CD8-positive, alpha-beta T cell (primary cell): ENCODE measurements at regions of chr19 and their contacts with region 1.

Region 1: GRCh38 chr19:29610563-29611271 is 4.6 kb downstream of the POP4 start:
- DNase-seq: peak; percentile 77 to 92 (median 86)
- ATAC-seq: peak; percentile 58
- H3K4me3 ChIP-seq: peak overlapping the region in 1 of 2 experiments; percentile 20
- H3K4me3 Mint-ChIP-seq: no peak overlapping the region
- H3K27ac ChIP-seq: peak overlapping the region in 1 of 2 experiments; percentile 62
- H3K27ac Mint-ChIP-seq: peak overlapping the region; percentile 42
- H3K4me1 ChIP-seq: peaks cover 19% of the 10 kb centered on the region
- H3K4me1 Mint-ChIP-seq: peaks cover 28% of the 10 kb centered on the region
- H3K27me3 ChIP-seq: no peaks in the 10 kb centered on the region
- H3K27me3 Mint-ChIP-seq: no peaks in the 10 kb centered on the region
- CTCF ChIP-seq: peak; percentile 88

Region 2: DNA sequence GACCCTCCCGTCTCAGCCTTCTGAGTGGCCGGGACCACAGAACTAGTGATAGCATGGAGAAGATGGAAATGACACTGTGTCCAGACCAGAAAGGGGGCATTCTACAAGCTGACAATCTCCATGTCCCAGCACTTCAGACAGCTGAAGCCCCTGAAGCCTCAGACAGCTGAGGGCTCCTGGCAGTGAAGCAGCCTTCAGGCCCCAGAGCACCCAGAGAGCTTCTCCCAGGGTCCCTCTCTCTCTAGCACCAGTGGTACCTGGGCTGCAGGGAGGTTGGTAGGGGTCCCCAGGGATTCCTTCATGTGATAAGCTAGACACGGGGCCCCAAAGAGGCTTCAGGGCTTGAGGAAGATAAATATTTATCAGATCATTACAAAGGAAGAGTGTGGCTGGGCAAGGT is 12.2 kb before region 1 on chr19:
- CTCF ChIA-PET with region 1: interaction called, 15 read pairs
- POLR2A ChIA-PET with region 1: interaction called, 6 read pairs
- intact Hi-C with region 1: no loop called
- DNase-seq: no peak
- ATAC-seq: no peak
- H3K4me3 ChIP-seq: no peak overlapping the region
- H3K4me3 Mint-ChIP-seq: no peak overlapping the region
- H3K27ac ChIP-seq: no peak overlapping the region
- H3K27ac Mint-ChIP-seq: no peak overlapping the region
- H3K4me1 ChIP-seq: no peaks in the 10 kb centered on the region
- H3K4me1 Mint-ChIP-seq: no peaks in the 10 kb centered on the region
- H3K27me3 ChIP-seq: peaks cover 0 to 2% of the 10 kb centered on the region in 2 experiments
- H3K27me3 Mint-ChIP-seq: peaks cover 10% of the 10 kb centered on the region
- CTCF ChIP-seq: no peak

Region 3: GRCh38 chr19:29671393-29672160 is 60.9 kb after region 1 on chr19:
- CTCF ChIA-PET with region 1: interaction called, 87 read pairs
- POLR2A ChIA-PET with region 1: interaction called, 51 read pairs
- intact Hi-C with region 1: loop called (anchors 1 to 2 kb)
- DNase-seq: peak; percentile 73 to 96 (median 91)
- ATAC-seq: peak; percentile 62
- H3K4me3 ChIP-seq: peak overlapping the region; percentile 16 to 26
- H3K4me3 Mint-ChIP-seq: peak overlapping the region; percentile 49
- H3K27ac ChIP-seq: peak overlapping the region; percentile 80 to 84
- H3K27ac Mint-ChIP-seq: peak overlapping the region; percentile 94
- H3K4me1 ChIP-seq: peaks cover 97% of the 10 kb centered on the region
- H3K4me1 Mint-ChIP-seq: peaks cover 90% of the 10 kb centered on the region
- H3K27me3 ChIP-seq: no peaks in the 10 kb centered on the region
- H3K27me3 Mint-ChIP-seq: no peaks in the 10 kb centered on the region
- CTCF ChIP-seq: peak; percentile 62

Region 4: DNA sequence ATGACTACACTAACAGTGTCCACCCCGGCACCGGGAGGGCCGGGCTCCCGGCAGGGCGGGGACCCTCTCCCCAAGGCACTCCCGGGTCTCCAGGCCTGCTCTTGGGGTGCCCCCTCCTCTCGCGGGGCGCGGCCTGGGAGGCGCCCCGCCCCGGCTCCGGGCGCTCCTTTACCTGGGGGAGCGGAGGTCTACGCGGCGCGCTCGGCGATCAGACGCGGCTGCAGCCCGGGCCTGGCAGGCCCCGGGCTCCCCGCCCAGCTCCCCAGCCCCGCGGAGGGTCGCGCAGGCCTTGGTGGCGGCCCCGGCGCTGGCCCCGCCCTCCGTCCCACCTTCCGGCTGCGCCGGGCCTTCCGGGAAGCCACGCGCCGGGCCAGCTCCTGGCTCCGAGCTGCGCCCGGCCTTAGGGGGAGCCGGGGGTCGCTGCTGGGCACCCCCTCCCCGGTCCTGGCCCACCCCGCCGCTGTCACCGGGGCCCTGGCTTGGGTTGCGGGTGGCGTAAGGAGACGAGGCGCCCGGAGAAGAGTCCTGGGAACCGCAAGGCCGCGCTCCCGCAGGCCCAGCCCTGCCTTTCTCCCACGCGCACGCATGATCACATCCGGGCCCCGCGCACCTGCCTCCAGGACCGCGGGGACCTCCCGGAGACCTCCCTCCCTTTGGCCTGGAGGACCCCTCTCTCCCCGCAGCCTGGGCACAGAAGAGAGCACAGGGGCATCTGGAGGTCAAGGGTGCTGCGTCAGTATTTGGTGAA is 104.4 kb after region 1 on chr19 and contains the start of gene C19orf12:
- CTCF ChIA-PET with region 1: interaction called, 246 read pairs
- POLR2A ChIA-PET with region 1: interaction called, 88 read pairs
- intact Hi-C with region 1: loop called (anchors 1 kb)
- DNase-seq: peak; percentile 21 to 78 (median 52)
- ATAC-seq: peak; percentile 54
- H3K4me3 ChIP-seq: peak within 1 kb of the TSS; percentile 77 to 88
- H3K4me3 Mint-ChIP-seq: peak within 1 kb of the TSS; percentile 86
- H3K27ac ChIP-seq: peak within 1 kb of the TSS; percentile 89 to 99
- H3K27ac Mint-ChIP-seq: peak within 1 kb of the TSS; percentile 97
- H3K4me1 ChIP-seq: peaks cover 54% of the 10 kb centered on the region
- H3K4me1 Mint-ChIP-seq: peaks cover 53% of the 10 kb centered on the region
- H3K27me3 ChIP-seq: no peaks in the 10 kb centered on the region
- H3K27me3 Mint-ChIP-seq: no peaks in the 10 kb centered on the region
- CTCF ChIP-seq: no peak
- total RNA-seq, gene C19orf12: 7.0 to 8.9 TPM

Region 5: DNA sequence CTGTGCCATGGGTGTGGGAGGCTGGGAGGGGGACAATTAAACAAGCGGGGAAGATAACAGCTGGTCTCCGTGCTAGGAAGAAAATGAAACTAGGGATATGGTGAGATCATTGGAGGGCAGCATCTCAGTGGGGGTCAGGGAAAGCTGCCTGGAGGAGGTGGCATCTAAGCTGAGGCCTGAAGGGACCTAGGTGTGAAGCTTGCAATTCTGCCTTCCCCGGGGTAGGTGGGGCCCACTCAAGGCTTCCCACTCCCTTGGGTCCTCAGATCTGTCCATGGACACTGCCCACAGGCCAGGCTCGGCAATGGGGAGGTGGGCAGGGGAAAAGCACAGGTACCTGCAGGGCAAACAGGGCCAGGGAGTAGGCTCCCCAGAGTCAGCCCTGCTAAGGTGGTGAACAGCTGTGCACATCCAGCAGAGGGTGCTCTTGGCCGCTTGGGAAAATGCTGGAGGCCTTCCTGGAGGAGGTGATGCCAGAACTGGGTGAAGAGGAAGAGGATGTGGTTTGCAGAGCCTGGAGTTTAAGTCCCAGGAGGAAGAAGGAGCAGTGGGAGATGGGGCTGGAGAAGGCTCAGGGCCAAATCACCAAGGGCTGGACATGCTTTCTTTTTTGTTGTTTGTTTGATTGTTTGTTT is 175.4 kb after region 1 on chr19:
- CTCF ChIA-PET with region 1: no interaction called
- POLR2A ChIA-PET with region 1: no interaction called
- intact Hi-C with region 1: no loop called
- DNase-seq: peak in 1 of 9 experiments; percentile 21
- ATAC-seq: no peak
- H3K4me3 ChIP-seq: no peak overlapping the region
- H3K4me3 Mint-ChIP-seq: no peak overlapping the region
- H3K27ac ChIP-seq: no peak overlapping the region
- H3K27ac Mint-ChIP-seq: no peak overlapping the region
- H3K4me1 ChIP-seq: no peaks in the 10 kb centered on the region
- H3K4me1 Mint-ChIP-seq: no peaks in the 10 kb centered on the region
- H3K27me3 ChIP-seq: no peaks in the 10 kb centered on the region
- H3K27me3 Mint-ChIP-seq: no peaks in the 10 kb centered on the region
- CTCF ChIP-seq: no peak

Region 6: GRCh38 chr19:29844891-29845572 is 234.3 kb after region 1 on chr19:
- CTCF ChIA-PET with region 1: interaction called, 4 read pairs
- POLR2A ChIA-PET with region 1: interaction called, 9 read pairs
- intact Hi-C with region 1: loop called in 1 of 2 experiments (anchors 10 kb)
- DNase-seq: peak; percentile 92 to 99 (median 97)
- ATAC-seq: peak; percentile 79
- H3K4me3 ChIP-seq: peak overlapping the region; percentile 93 to 95
- H3K4me3 Mint-ChIP-seq: peak overlapping the region; percentile 96
- H3K27ac ChIP-seq: peak overlapping the region; percentile 74 to 80
- H3K27ac Mint-ChIP-seq: peak overlapping the region; percentile 97
- H3K4me1 ChIP-seq: peaks cover 12% of the 10 kb centered on the region
- H3K4me1 Mint-ChIP-seq: peaks cover 14% of the 10 kb centered on the region
- H3K27me3 ChIP-seq: peaks cover 0 to 7% of the 10 kb centered on the region in 2 experiments
- H3K27me3 Mint-ChIP-seq: no peaks in the 10 kb centered on the region
- CTCF ChIP-seq: no peak